Breast epithelium (tissue), 4 donors: ENCODE measurements at regions of chr15 and their contacts with region 1.

Region 1: DNA sequence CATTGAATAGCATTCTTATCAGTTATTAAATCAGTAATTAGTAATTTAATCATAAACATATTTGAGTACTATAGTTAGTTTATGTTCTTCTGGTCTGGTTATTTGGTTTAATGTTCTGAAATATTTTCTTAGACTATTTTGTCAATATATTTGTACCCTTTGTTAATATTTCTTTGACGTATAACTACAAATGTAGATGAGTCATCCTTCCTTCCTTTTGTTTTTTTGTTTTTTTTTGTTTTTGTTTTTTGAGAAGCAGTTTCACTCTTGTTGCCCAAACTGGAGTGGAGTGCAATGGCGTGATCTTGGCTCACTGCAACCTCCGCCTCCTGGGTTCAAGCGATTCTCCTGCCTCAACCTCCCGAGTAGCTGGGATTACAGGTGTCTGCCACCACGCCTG is 17.4 kb upstream of the EIF3J start:
- DNase-seq: no peak
- H3K4me3 ChIP-seq: no peak overlapping the region
- H3K27ac ChIP-seq: no peak overlapping the region
- H3K4me1 ChIP-seq: no peaks in the 10 kb centered on the region
- H3K27me3 ChIP-seq: no peaks in the 10 kb centered on the region
- CTCF ChIP-seq: no peak
- POLR2A ChIP-seq: no peak

Region 2: DNA sequence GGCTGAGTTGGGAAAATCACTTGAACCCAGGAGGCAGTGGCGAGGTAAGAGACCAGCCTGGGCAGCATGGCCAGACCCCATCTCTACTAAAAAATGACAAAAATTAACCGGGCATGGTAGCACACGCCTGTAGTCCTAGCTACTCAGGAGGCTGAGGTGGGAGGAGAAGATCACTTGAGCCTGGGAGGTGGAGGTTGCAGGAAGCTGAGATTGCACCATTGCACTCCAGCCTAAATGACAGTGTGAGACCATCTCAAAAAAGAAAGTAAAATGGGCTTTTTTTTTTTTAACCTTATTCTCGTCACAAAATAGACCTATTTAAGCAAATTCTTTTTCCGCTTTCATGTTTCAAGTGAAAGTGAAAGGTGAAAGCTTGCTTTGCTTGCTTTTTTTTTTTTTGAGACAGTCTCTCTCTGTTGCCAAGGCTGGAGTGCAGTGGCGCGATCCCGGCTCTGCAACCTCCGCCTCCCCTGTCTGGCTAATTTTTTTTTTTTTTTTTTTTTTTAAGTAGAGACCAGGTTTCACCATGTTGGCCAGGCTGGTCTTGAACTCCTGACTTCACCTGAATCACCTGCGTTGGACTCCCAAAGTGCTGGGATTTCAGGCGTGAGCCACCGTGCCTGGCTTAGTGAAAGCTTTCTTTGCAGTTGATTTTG is 769.7 kb before region 1 on chr15:
- intact Hi-C with region 1: loop called (anchors 5 kb)
- DNase-seq: no peak
- H3K4me3 ChIP-seq: peak overlapping the region in 2 of 3 donors; percentile 24 to 53
- H3K27ac ChIP-seq: peak overlapping the region; percentile 16 to 48
- H3K4me1 ChIP-seq: no peaks in the 10 kb centered on the region
- H3K27me3 ChIP-seq: no peaks in the 10 kb centered on the region
- CTCF ChIP-seq: no peak
- POLR2A ChIP-seq: no peak

Region 3: GRCh38 chr15:44414001-44414400 is 105.5 kb before region 1 on chr15:
- intact Hi-C with region 1: no loop called
- DNase-seq: no peak
- H3K4me3 ChIP-seq: no peak overlapping the region
- H3K27ac ChIP-seq: no peak overlapping the region
- H3K4me1 ChIP-seq: no peaks in the 10 kb centered on the region
- H3K27me3 ChIP-seq: no peaks in the 10 kb centered on the region
- CTCF ChIP-seq: no peak
- POLR2A ChIP-seq: no peak

Region 4: GRCh38 chr15:44489464-44489863 is 30.1 kb before region 1 on chr15:
- intact Hi-C with region 1: no loop called
- DNase-seq: no peak
- H3K4me3 ChIP-seq: no peak overlapping the region
- H3K27ac ChIP-seq: no peak overlapping the region
- H3K4me1 ChIP-seq: no peaks in the 10 kb centered on the region
- H3K27me3 ChIP-seq: no peaks in the 10 kb centered on the region
- CTCF ChIP-seq: no peak
- POLR2A ChIP-seq: no peak